ENCODE measurements at regions of chr4 and their contacts with region 1.

Region 1: DNA sequence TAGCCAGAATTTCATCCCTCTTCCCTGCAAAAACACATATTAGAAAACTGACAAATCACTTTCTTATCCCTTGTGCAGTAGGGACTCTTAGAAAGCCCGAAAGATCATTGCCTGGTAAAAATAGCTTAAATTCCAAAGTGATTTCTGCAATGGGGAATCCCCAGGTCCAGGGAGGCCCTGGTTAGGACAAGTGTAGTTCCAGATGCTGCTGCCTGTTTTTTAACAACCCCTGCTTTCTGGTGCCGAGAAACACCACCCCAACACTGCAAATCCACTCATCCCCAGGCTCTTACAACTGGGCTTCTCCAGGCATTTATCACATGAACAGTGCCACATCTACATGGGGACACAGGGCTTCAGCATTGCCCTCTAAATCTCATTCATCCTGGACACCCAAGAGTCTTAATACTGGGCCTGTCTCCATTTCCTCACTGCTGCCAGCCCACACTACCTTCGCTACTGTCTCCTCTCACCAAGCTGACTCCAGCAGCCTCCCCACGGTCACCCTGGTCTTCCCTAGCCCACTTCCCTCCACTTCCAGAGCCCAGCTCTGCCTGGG is 112.2 kb upstream of the PSAPL1 start:
- DNase-seq: peak; percentile 24
- H3K4me3 Mint-ChIP-seq: peak overlapping the region; percentile 61
- H3K27ac Mint-ChIP-seq: peak overlapping the region; percentile 39
- H3K4me1 Mint-ChIP-seq: peaks cover 14% of the 10 kb centered on the region
- H3K27me3 Mint-ChIP-seq: no peaks in the 10 kb centered on the region
- CTCF ChIP-seq: no peak

Region 2: DNA sequence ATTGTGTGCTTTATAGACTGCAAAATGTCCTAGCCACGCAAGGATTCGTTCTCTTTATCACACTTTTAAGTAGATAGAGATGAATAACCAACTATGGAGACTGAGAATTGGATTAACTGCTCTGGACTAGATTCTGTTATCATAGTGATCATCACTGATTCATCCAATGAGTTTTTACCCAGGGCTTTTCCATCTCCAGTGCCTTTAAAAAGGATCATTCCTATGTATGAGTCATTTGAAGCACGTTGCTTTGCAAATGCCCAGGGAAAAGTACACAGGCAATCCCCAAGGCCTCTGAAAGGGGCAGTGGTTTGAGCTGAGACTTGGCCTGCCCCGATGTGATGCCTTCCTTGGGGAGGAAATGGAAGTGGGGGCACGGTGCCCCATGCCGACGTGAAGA is 10.6 kb after region 1 on chr4:
- CTCF ChIA-PET with region 1: no interaction called
- POLR2A ChIA-PET with region 1: interaction called, 18 read pairs
- intact Hi-C with region 1: no loop called
- DNase-seq: peak; percentile 50
- H3K4me3 Mint-ChIP-seq: no peak overlapping the region
- H3K27ac Mint-ChIP-seq: peak overlapping the region; percentile 29
- H3K4me1 Mint-ChIP-seq: peaks cover 12% of the 10 kb centered on the region
- H3K27me3 Mint-ChIP-seq: no peaks in the 10 kb centered on the region
- CTCF ChIP-seq: no peak

Measured in MCF 10A (cell line).